A549 (cell line): ENCODE measurements at regions of chr15 and their contacts with region 1.

Region 1: GRCh38 chr15:85504749-85505676 is 124.6 kb downstream of the AKAP13 start:
- DNase-seq: peak; percentile 49 to 74
- ATAC-seq: peak; percentile 83 to 89; a peak in 4 of 6 replicates
- H3K4me3 ChIP-seq: no peak overlapping the region
- H3K27ac ChIP-seq: peak overlapping the region in 1 of 2 experiments; percentile 6; a peak in 1 of 6 replicates
- H3K4me1 ChIP-seq: peaks cover 15% of the 10 kb centered on the region; the same call in 2 of the 3 replicates
- CTCF ChIP-seq: peak; percentile 93
- EP300 ChIP-seq: no peak
- POLR2A ChIP-seq: no peak
- RAD21 ChIP-seq: peak; percentile 69 to 74

Region 2: GRCh38 chr15:85164809-85165463 is 340.1 kb before region 1 on chr15:
- CTCF ChIA-PET with region 1: no interaction called
- POLR2A ChIA-PET with region 1: no interaction called
- DNase-seq: no peak
- ATAC-seq: no peak
- H3K4me3 ChIP-seq: no peak overlapping the region
- H3K27ac ChIP-seq: no peak overlapping the region
- H3K4me1 ChIP-seq: peaks cover 5% of the 10 kb centered on the region; the same call in 2 of the 3 replicates
- CTCF ChIP-seq: no peak
- EP300 ChIP-seq: no peak
- POLR2A ChIP-seq: no peak
- RAD21 ChIP-seq: no peak

Region 3: DNA sequence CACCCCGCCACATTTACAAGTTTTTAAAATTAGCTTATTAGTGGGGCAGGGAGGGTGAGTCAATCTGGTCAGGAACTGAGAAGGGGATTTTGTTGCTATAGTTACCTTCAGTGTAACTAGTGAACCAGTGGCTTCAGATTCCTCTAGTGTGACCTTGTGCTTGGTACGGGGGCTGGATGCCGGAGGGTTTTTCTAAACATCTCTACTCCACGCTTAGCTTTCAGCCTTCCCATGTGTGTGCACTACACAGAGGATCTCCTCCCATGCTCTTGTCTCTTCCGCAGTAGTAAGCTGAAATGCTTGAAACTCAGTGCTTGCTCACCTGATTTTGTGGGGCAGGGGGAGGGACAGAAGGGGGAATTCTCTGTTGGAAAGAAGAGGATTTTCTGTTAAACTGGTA is 192.5 kb before region 1 on chr15:
- CTCF ChIA-PET with region 1: interaction called, 10 read pairs
- POLR2A ChIA-PET with region 1: no interaction called
- DNase-seq: no peak
- ATAC-seq: peak; percentile 37 to 61; a peak in 4 of 6 replicates
- H3K4me3 ChIP-seq: no peak overlapping the region
- H3K27ac ChIP-seq: peak overlapping the region in 1 of 2 experiments; percentile 7; a peak in 2 of 6 replicates
- H3K4me1 ChIP-seq: peaks cover 19% of the 10 kb centered on the region
- CTCF ChIP-seq: no peak
- EP300 ChIP-seq: no peak
- POLR2A ChIP-seq: no peak
- RAD21 ChIP-seq: no peak

Region 4: DNA sequence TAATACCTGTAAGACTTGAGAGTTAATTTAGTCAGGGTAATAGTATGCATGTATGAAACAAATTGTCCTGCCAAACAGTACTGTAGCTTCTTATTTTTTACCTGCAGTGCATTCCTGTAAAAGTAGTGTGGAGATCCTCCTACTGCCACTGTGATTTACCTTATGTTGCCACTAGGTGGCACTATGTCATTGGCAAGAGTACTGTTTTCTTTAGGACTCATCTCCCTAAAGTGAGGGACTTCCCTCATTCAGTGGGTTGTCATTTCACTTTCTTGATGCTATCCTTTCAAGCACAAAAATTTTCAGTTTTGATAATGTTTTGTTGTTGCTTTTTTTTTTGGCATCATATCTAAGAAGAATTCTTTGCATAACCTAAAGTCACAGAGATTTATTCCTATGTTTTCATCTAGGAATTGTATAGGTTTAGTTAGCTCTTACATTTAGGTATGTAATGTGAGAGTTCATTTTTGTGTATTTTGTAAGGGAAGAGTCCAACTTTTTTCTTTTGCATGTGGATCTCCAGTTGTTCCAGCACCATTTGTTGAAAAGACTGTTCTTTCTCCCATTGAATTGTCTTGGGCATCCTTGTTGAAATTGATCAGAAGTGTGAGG is 19.0 kb before region 1 on chr15:
- CTCF ChIA-PET with region 1: interaction called, 56 read pairs
- POLR2A ChIA-PET with region 1: no interaction called
- DNase-seq: peak; percentile 72 to 84
- ATAC-seq: peak; percentile 91 to 95
- H3K4me3 ChIP-seq: no peak overlapping the region
- H3K27ac ChIP-seq: no peak overlapping the region
- H3K4me1 ChIP-seq: peaks cover 20% of the 10 kb centered on the region; the same call in 2 of the 3 replicates
- CTCF ChIP-seq: peak; percentile 90
- EP300 ChIP-seq: no peak
- POLR2A ChIP-seq: no peak
- RAD21 ChIP-seq: peak; percentile 89 to 92

Region 5: DNA sequence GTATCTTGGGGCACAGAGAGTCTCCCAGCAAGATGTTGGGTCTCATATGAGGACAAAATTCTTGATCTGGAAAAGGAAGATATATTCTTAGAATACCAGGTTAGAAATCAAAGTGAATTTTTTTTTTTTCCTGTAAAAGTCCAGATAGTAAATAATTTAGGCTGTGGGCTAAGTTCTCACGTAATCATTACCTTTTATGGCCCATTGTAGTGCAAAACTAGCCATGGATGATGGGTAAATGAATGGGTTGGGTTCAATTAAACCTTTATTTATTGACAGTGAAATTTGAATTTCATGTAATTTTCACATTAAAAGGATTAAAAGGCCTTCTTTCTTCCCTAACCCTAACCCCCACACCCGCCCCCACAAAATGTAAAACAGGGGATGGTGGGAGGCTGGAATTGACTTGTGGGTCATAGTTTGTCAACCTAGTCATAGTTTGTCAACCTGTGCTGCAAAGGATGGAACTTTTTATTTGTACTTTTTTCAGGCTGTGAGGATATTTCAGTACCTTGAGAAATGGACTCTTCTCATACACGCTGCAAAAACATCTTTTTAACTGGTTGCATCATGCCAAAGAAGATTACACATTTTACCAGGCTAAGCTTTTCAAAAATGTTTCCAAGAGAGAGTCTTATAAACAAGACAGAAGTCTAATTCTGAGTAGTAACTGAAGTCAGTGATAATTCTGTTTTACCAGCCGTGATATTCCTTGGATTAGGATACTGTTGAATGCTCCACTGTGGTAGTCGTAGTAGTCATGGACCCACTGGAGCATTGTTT is 14.2 kb after region 1 on chr15:
- CTCF ChIA-PET with region 1: interaction called, 22 read pairs
- POLR2A ChIA-PET with region 1: no interaction called
- DNase-seq: no peak
- ATAC-seq: no peak
- H3K4me3 ChIP-seq: no peak overlapping the region
- H3K27ac ChIP-seq: no peak overlapping the region
- H3K4me1 ChIP-seq: peaks cover 22% of the 10 kb centered on the region; the same call in 2 of the 3 replicates
- CTCF ChIP-seq: no peak
- EP300 ChIP-seq: no peak
- POLR2A ChIP-seq: no peak
- RAD21 ChIP-seq: no peak

Region 6: GRCh38 chr15:85554852-85555521 is 50.0 kb after region 1 on chr15:
- CTCF ChIA-PET with region 1: interaction called, 11 read pairs
- POLR2A ChIA-PET with region 1: no interaction called
- DNase-seq: no peak
- ATAC-seq: no peak
- H3K4me3 ChIP-seq: no peak overlapping the region
- H3K27ac ChIP-seq: no peak overlapping the region
- H3K4me1 ChIP-seq: no peaks in the 10 kb centered on the region; the same call in 2 of the 3 replicates
- CTCF ChIP-seq: no peak
- EP300 ChIP-seq: no peak
- POLR2A ChIP-seq: no peak
- RAD21 ChIP-seq: no peak

Region 7: GRCh38 chr15:85639752-85640381 is 134.9 kb after region 1 on chr15:
- CTCF ChIA-PET with region 1: no interaction called
- POLR2A ChIA-PET with region 1: no interaction called
- DNase-seq: no peak
- ATAC-seq: peak in 1 of 2 experiments; percentile 26; a peak in 1 of 6 replicates
- H3K4me3 ChIP-seq: no peak overlapping the region
- H3K27ac ChIP-seq: no peak overlapping the region
- H3K4me1 ChIP-seq: peaks cover 7% of the 10 kb centered on the region; the same call in 2 of the 3 replicates
- CTCF ChIP-seq: no peak
- EP300 ChIP-seq: no peak
- POLR2A ChIP-seq: no peak
- RAD21 ChIP-seq: no peak

Region 8: GRCh38 chr15:85658816-85659215 is 153.8 kb after region 1 on chr15:
- CTCF ChIA-PET with region 1: no interaction called
- POLR2A ChIA-PET with region 1: no interaction called
- DNase-seq: no peak
- ATAC-seq: no peak
- H3K4me3 ChIP-seq: no peak overlapping the region
- H3K27ac ChIP-seq: no peak overlapping the region
- H3K4me1 ChIP-seq: no peaks in the 10 kb centered on the region
- CTCF ChIP-seq: no peak
- EP300 ChIP-seq: no peak
- POLR2A ChIP-seq: no peak
- RAD21 ChIP-seq: no peak